ENCODE measurements at regions of chr1 and their contacts with region 1.

Region 1: GRCh38 chr1:17439250-17440073 is at the start of gene RCC2:
- DNase-seq: peak; percentile 10 to 43
- ATAC-seq: peak; percentile 69 to 73
- H3K4me3 ChIP-seq: peak within 1 kb of the TSS; percentile 77 to 99 (median 80)
- H3K27ac ChIP-seq: peak within 1 kb of the TSS; percentile 79 to 89 (median 83)
- H3K4me1 ChIP-seq: peaks cover 24 to 32% of the 10 kb centered on the region in 2 donors
- H3K27me3 ChIP-seq: no peaks in the 10 kb centered on the region
- CTCF ChIP-seq: peak in 1 of 5 experiments; percentile 19
- POLR2A ChIP-seq: peak; percentile 20 to 58
- total RNA-seq, gene RCC2: 5.7 to 11.5 (median 7.8) TPM

Region 2: DNA sequence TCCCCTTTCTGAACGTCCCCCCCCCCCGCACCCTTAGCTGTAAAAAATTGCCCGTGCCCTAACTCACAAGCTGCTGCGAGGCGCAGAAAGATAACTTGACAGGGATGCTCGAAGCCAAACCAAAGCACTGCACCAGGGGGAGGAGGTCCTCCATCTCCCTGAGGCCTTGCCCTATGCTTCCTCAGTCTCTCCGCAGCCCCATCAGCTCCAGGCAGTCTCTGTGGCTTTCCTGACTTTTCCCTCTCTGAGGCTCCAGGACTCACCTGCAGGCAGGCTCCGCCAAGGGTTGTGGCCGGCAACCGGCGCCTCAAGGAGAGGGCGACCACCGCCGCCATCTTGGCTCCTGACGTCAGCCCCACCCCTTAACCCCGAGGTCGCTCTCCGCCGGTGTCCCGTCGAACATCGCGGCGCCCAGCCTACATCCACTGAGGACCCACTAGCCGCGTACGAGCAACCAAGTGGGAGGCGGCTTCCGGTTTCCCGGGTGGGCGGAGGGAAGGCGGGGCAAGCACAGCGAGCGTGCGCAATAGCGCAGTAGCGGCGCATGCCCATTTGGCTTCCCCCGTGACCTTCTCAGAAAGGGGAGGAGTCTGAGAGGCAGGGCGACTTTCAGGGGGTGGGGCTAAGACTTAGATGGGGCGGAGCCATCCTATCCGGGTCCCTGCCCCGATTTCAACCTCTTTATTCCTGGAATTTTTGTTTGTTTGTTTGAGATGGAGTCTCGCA is 385.6 kb before region 1 on chr1 and contains the start of gene SDHB:
- in situ Hi-C with region 1: no loop called
- intact Hi-C with region 1: loop called (anchors 10 kb)
- DNase-seq: peak; percentile 98
- ATAC-seq: peak; percentile 95 to 97
- H3K4me3 ChIP-seq: peak within 1 kb of the TSS; percentile 92 to 97 (median 94)
- H3K27ac ChIP-seq: peak within 1 kb of the TSS; percentile 96 to 97 (median 96)
- H3K4me1 ChIP-seq: peaks cover 23 to 24% of the 10 kb centered on the region in 2 donors
- H3K27me3 ChIP-seq: no peaks in the 10 kb centered on the region
- CTCF ChIP-seq: no peak
- POLR2A ChIP-seq: peak; percentile 95 to 97
- total RNA-seq, gene SDHB: 238 to 405 (median 328) TPM

Region 3: GRCh38 chr1:17125756-17126237 is 313.7 kb before region 1 on chr1:
- in situ Hi-C with region 1: no loop called
- intact Hi-C with region 1: loop called (anchors 10 kb)
- DNase-seq: peak; percentile 66 to 73
- ATAC-seq: peak; percentile 19 to 35
- H3K4me3 ChIP-seq: no peak overlapping the region
- H3K27ac ChIP-seq: no peak overlapping the region
- H3K4me1 ChIP-seq: peaks cover 13 to 20% of the 10 kb centered on the region in 2 donors
- H3K27me3 ChIP-seq: no peaks in the 10 kb centered on the region
- CTCF ChIP-seq: peak; percentile 81 to 98 (median 94)
- POLR2A ChIP-seq: no peak

Region 4: DNA sequence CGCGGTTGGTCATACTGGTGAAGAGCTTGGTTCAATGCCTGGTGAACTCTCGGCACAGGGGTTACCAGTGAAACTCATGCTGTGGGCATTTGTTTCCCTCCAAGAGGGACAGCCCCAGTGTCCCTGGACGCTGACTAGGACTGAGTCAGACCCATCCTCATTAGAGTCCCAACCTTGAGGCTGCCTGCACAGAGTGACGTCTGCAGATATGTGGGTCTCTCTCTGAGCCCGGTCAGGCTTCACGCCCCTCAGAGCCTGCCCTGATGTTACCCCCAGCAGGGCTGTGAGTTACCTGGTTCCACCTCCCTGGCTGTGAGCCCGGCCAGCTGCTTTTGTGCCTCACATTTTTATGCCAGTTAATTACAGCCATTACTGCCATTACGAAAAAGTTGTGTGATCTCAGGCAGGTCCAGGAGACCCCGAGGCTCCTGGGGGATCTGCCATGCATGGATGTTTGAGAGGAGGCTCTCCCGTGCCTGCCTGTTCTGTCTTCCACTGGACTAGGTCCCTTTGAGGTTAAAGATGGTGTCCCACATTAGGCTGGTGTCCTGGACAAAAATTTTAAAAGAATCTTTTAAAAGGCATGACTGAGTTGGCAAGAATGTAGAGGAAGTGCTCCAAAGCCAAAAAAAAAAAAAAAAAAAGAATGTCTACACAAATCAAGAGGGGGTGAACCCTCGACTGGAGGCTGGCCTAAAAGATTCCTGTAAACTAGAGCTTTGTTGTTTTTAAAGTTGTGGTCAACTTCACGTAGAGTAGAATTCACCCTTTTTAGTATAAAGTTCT is 271.2 kb before region 1 on chr1:
- in situ Hi-C with region 1: no loop called
- intact Hi-C with region 1: no loop called
- DNase-seq: no peak
- ATAC-seq: no peak
- H3K4me3 ChIP-seq: no peak overlapping the region
- H3K27ac ChIP-seq: no peak overlapping the region
- H3K4me1 ChIP-seq: peaks cover 10 to 12% of the 10 kb centered on the region in 2 donors
- H3K27me3 ChIP-seq: peaks cover 0 to 5% (median 0%) of the 10 kb centered on the region in 3 donors
- CTCF ChIP-seq: no peak
- POLR2A ChIP-seq: no peak

Region 5: DNA sequence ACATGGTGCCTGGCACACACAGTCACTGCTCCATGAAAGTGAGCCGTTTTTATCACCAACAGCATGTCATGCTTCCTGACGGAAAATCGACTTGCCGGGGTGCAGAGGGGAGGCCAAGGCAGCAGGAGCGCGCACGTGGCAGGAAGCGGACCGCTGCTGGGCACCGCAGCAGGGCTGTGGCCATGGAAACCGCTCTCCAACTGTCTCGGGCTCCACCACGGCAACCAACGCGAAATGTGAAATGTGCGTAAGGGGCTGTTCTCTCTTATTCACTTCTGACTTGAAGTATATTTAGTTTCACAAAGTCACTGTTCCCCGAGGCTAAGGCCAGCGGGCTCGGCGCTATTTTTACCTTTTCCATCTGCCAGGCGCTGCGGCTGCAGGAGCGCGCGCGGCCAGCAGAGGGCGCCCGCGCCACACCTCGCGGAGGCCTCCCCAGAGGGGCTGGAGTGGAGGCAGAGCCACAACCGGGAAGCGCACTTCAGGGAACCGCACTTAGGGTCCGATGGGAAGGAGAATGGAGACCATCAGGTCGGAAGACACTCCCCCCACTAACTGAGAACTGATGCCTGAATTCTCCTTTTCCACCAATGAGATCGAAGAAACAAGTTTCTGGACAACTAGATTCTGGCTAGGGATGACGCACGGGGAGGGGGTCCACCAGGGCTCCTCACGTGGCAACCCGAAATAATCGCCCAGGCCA is 19.7 kb before region 1 on chr1:
- in situ Hi-C with region 1: no loop called
- intact Hi-C with region 1: loop called (anchors 1 kb)
- DNase-seq: peak; percentile 35 to 79
- ATAC-seq: peak; percentile 89 to 96
- H3K4me3 ChIP-seq: peak overlapping the region in 3 of 4 donors; percentile 5 to 34 (median 25)
- H3K27ac ChIP-seq: peak overlapping the region; percentile 70 to 84 (median 78)
- H3K4me1 ChIP-seq: peaks cover 6 to 8% of the 10 kb centered on the region in 2 donors
- H3K27me3 ChIP-seq: no peaks in the 10 kb centered on the region
- CTCF ChIP-seq: peak; percentile 96 to 100 (median 98)
- POLR2A ChIP-seq: peak in 1 of 2 donors; percentile 27

Region 6: GRCh38 chr1:17624611-17625233 is 185.3 kb after region 1 on chr1:
- in situ Hi-C with region 1: no loop called
- intact Hi-C with region 1: loop called (anchors 2 kb)
- DNase-seq: peak; percentile 91 to 94
- ATAC-seq: peak; percentile 82 to 86
- H3K4me3 ChIP-seq: no peak overlapping the region
- H3K27ac ChIP-seq: peak overlapping the region; percentile 84 to 97 (median 92)
- H3K4me1 ChIP-seq: peaks cover 35 to 55% of the 10 kb centered on the region in 2 donors
- H3K27me3 ChIP-seq: no peaks in the 10 kb centered on the region
- CTCF ChIP-seq: no peak
- POLR2A ChIP-seq: peak in 1 of 2 donors; percentile 19

Region 7: DNA sequence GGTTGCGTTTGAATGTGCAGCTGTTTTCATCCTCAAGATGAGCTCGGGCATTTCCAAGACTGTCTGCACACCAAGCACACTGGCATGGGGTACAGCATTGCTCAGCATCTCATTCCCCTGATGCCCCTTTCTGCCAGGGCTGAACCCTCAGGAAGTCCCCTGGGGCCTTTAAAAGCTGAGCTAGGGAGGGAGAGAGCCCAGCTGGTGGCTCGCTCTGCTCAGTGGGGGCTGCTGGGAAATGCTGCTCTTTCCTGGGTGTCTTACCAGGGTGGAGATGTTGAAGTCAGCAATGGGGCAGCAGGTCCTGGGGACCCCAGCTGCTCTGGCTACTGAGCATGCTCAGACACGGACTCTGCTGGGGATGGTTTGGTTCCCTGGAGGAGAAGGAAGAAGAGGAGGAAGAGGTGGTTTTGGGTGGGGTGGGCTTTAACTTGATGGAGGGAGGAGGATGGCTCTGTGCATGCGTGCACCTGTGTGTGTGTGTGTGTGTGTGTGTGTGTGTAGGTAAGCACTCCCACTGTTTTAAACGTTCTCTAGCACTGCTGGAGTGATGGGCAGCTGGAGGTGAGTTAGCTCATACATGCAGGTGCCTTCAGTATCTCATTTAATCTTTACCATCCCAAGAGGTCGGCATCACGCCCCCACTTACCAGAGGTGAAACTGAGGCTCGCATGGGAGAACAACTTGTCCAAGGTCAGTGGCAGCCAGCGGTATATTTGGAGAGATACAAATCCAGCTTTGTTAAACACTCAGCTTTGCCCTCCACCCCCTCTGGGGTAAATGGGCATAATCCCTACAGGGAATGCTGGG is 356.6 kb after region 1 on chr1:
- in situ Hi-C with region 1: no loop called
- intact Hi-C with region 1: no loop called
- DNase-seq: no peak
- ATAC-seq: no peak
- H3K4me3 ChIP-seq: no peak overlapping the region
- H3K27ac ChIP-seq: no peak overlapping the region
- H3K4me1 ChIP-seq: no peaks in the 10 kb centered on the region
- H3K27me3 ChIP-seq: peaks cover 12 to 54% (median 16%) of the 10 kb centered on the region in 3 donors
- CTCF ChIP-seq: no peak
- POLR2A ChIP-seq: no peak

Measured in gastrocnemius medialis (tissue), 4 donors.